Natural killer cell (primary cell): ENCODE measurements at regions of chr10 and their contacts with region 1.

Region 1: DNA sequence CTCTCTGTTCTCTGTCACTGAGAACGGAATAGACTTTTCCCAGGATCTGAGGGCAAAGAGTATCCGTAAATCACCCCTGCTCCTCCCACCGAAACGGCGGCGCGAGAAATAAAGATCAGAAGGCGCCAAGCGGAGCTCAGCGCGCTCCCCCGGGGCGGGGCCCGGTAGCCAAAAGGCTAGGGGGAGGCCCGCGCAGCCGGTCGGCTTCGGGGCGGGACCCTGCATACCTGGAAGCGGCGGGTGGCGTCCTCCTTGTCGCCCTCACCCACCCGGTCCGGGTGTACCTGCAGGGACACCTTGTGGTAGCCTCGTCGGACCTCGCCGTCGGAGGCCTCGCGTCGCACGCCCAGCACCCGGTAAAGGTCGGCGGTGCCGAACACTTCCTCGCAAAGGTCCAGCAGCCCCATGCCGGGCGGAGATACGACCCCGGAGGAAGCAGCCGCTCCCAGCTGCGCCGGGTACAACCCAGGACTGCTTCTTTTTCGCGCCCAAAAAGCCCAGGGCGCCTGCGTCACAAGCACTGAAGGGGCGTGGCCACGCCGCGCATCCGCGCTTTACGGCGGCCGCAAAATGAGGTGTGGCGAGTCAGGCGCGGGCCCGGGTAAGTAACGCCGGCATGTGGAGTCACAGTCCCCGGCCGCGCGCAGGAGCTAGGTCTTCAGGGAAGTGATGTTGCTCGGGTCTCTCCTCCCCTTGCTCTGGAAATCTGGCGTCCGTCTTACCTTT is at the start of gene DNAJC9:
- DNase-seq: peak; percentile 97 to 98
- ATAC-seq: peak; percentile 92 to 98 (median 92)
- H3K4me3 ChIP-seq: peak within 1 kb of the TSS; percentile 83
- H3K4me3 Mint-ChIP-seq: peak within 1 kb of the TSS; percentile 95
- H3K27ac ChIP-seq: peak within 1 kb of the TSS; percentile 88
- H3K27ac Mint-ChIP-seq: peak within 1 kb of the TSS; percentile 89 to 94
- H3K4me1 ChIP-seq: peaks cover 17% of the 10 kb centered on the region
- H3K4me1 Mint-ChIP-seq: peaks cover 43 to 48% of the 10 kb centered on the region in 2 donors
- H3K27me3 ChIP-seq: no peaks in the 10 kb centered on the region
- H3K27me3 Mint-ChIP-seq: no peaks in the 10 kb centered on the region
- CTCF ChIP-seq: no peak
- total RNA-seq, gene DNAJC9: 14.1 to 19.0 (median 17.4) TPM

Region 2: GRCh38 chr10:73167783-73168464 is 79.0 kb before region 1 on chr10 and contains the starts of genes ECD and FAM149B1:
- intact Hi-C with region 1: loop called (anchors 5 kb)
- DNase-seq: peak; percentile 93 to 96
- ATAC-seq: peak; percentile 89 to 97 (median 92)
- H3K4me3 ChIP-seq: peak within 1 kb of the TSS; percentile 89
- H3K4me3 Mint-ChIP-seq: peak within 1 kb of the TSS; percentile 100
- H3K27ac ChIP-seq: peak within 1 kb of the TSS; percentile 93
- H3K27ac Mint-ChIP-seq: peak within 1 kb of the TSS; percentile 100
- H3K4me1 ChIP-seq: peaks cover 9% of the 10 kb centered on the region
- H3K4me1 Mint-ChIP-seq: peaks cover 37 to 40% of the 10 kb centered on the region in 2 donors
- H3K27me3 ChIP-seq: no peaks in the 10 kb centered on the region
- H3K27me3 Mint-ChIP-seq: no peaks in the 10 kb centered on the region
- CTCF ChIP-seq: peak; percentile 22
- total RNA-seq, gene ECD: 48.4 to 53.6 (median 52.1) TPM
- total RNA-seq, gene FAM149B1: 12.7 to 17.6 (median 12.8) TPM

Region 3: GRCh38 chr10:73232887-73233286 is 14.1 kb before region 1 on chr10:
- intact Hi-C with region 1: no loop called
- DNase-seq: no peak
- ATAC-seq: no peak
- H3K4me3 ChIP-seq: no peak overlapping the region
- H3K4me3 Mint-ChIP-seq: no peak overlapping the region
- H3K27ac ChIP-seq: no peak overlapping the region
- H3K27ac Mint-ChIP-seq: no peak overlapping the region
- H3K4me1 ChIP-seq: no peaks in the 10 kb centered on the region
- H3K4me1 Mint-ChIP-seq: no peaks in the 10 kb centered on the region
- H3K27me3 ChIP-seq: no peaks in the 10 kb centered on the region
- H3K27me3 Mint-ChIP-seq: no peaks in the 10 kb centered on the region
- CTCF ChIP-seq: no peak

Region 4: DNA sequence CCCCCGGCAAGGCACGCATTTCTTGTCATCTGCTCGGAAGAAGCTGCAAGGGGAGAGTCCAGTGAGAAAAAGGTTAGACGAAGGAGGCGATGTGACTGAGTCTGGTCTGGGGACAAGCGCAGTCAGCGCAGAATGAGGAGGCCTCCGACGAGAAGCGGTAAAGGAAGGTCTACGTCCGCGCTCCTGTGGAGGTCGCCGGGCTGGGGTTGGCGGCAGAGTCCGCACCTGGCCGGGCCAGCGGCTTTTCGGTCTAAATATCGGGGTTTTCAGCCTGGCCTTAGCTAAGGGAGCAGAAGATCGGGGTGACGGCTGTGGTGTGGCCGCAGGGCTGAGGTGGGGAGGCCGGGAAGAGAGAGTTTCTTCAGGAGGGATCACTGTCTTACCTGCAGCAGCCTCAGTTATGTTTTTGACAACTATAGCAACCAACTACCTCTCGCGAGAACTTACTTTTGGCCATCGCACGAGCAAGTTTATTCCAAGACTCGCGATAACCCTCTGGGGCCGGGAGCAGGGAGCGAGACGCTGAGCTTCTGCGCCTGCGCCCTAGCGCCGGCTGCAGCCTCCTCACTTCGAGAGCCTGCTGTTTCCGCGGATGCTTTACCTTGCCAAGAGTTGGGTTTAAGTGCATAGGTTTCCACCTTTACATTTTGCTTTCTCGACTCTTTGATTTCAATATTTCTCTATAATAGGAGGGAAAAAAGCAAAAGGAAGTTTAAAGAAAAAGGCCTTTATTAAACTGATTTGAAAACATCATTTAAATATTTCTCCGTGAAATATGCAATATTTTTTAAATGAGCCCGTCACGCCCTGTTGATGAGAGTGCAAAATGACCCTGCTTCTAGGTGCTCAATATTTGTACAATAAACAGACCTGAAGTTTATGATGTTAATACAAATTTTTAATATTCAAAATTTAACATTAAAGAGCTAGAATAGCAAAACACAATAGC is 111.7 kb after region 1 on chr10 and contains the start of gene CFAP70:
- intact Hi-C with region 1: loop called (anchors 2 kb)
- DNase-seq: peak; percentile 79 to 98
- ATAC-seq: peak; percentile 94 to 99 (median 98)
- H3K4me3 ChIP-seq: peak within 1 kb of the TSS; percentile 72
- H3K4me3 Mint-ChIP-seq: peak within 1 kb of the TSS; percentile 97
- H3K27ac ChIP-seq: peak within 1 kb of the TSS; percentile 68
- H3K27ac Mint-ChIP-seq: peak within 1 kb of the TSS; percentile 91 to 96
- H3K4me1 ChIP-seq: peaks cover 6% of the 10 kb centered on the region
- H3K4me1 Mint-ChIP-seq: peaks cover 14% of the 10 kb centered on the region in 2 donors
- H3K27me3 ChIP-seq: no peaks in the 10 kb centered on the region
- H3K27me3 Mint-ChIP-seq: peaks cover 0 to 14% of the 10 kb centered on the region in 2 donors
- CTCF ChIP-seq: no peak
- total RNA-seq, gene CFAP70: 0.28 to 2.9 (median 0.95) TPM

Region 5: DNA sequence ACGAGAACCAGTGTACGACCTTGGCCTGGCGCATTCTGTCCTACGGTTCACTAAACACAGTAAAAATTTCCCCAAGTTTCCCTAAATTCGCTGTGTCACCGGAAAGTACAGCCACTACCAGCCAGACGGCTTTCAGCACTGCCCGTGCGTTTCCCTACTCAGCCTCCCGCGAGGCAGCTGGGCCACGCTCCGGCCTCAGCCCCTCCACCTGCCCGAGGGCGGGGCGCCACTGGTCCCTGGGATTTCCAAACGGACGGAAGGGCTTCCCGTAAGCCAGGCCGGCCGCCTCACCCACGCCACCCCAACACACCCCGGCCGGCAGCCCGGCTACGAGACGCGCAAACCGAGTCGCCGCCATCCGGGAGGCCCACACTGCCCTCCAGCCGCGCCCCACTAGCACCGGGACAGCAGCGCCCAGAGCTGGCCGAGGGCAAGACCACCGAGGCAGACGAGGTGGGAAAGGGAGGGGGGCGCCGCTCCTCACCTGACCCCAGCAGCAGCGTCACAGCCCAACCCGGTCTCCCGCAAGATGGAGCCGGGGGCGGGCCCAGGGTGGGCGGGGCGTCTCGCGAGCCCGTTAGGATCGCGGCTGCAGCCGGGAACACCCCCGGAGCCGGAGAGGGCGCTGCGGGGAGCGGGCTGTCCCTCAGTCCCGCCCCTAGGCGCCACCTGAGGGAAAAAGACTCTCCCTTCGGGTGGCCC is 166.7 kb after region 1 on chr10 and contains the start of gene ANXA7:
- intact Hi-C with region 1: loop called (anchors 5 kb)
- DNase-seq: peak; percentile 86 to 94
- ATAC-seq: peak; percentile 92 to 98 (median 94)
- H3K4me3 ChIP-seq: peak within 1 kb of the TSS; percentile 78
- H3K4me3 Mint-ChIP-seq: peak within 1 kb of the TSS; percentile 95
- H3K27ac ChIP-seq: peak within 1 kb of the TSS; percentile 86
- H3K27ac Mint-ChIP-seq: peak within 1 kb of the TSS; percentile 91 to 92
- H3K4me1 ChIP-seq: peaks cover 8% of the 10 kb centered on the region
- H3K4me1 Mint-ChIP-seq: peaks cover 32 to 36% of the 10 kb centered on the region in 2 donors
- H3K27me3 ChIP-seq: no peaks in the 10 kb centered on the region
- H3K27me3 Mint-ChIP-seq: peaks cover 0 to 2% of the 10 kb centered on the region in 2 donors
- CTCF ChIP-seq: no peak
- total RNA-seq, gene ANXA7: 61.0 to 82.0 (median 72.5) TPM